Tibial artery (tissue), 4 donors: ENCODE measurements at regions of chr9 and their contacts with region 1.

Region 1: DNA sequence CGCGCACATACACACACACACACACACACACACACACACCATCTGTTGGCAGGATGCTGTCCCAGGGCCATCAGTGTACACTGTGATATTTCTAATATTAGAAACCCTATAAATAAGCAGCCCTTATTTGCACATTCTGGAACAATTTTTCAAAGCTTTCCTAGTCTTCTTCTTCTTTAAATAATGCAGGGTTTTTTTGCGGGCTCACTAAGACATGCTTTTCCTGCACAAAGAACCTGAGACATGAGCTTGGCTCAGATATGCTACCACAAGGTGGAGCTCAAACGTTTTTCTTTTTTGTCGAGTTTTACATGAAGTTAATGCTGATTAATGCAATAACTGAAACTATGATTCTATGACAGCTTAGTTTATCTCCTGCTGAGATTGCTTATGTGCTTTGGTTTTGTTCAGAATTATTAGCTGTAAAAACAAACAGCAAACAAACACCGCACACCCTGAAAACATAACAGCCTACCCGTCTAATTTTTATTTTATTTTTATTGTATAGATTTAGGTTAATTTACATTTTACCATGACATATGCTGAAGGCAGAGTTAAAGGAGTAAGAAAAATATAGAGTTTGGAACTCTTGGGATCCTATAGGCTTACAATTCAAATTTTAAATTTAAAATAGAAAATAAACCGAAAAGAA is 95.8 kb downstream of the ALDH1A1 start:
- DNase-seq: no peak
- H3K4me3 ChIP-seq: no peak overlapping the region
- H3K27ac ChIP-seq: peak overlapping the region; percentile 13 to 38
- H3K4me1 ChIP-seq: peaks cover 0 to 25% (median 10%) of the 10 kb centered on the region in 4 donors
- H3K27me3 ChIP-seq: no peaks in the 10 kb centered on the region
- CTCF ChIP-seq: peak; percentile 65 to 82

Region 2: DNA sequence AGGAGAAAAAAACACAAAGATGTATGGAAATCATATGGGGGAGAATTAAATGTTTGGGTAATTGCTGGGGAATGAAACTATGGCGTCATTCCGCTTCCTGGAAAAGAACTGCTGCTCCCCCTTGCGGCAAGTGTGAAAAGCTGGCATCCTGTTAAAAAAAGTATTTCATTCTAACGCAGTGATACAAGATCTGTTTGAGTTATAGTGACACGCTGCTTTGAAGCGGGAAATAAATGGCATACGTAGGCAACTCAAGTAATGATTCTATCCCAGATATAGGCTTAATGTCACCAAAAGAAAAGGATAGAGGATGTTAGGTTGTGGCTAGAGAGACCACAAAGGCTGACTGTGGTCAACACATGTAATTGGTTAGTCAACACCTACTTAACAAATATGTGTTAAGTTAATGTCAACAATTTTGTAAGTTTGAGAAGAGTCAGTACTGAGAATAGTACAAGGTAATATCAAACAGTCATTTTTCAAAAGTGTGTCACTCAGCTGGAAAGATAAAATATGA is 166.0 kb after region 1 on chr9:
- intact Hi-C with region 1: loop called (anchors 10 kb)
- DNase-seq: peak in 1 of 2 donors; percentile 71
- H3K4me3 ChIP-seq: no peak overlapping the region
- H3K27ac ChIP-seq: no peak overlapping the region
- H3K4me1 ChIP-seq: peaks cover 0 to 15% (median 0%) of the 10 kb centered on the region in 4 donors
- H3K27me3 ChIP-seq: no peaks in the 10 kb centered on the region
- CTCF ChIP-seq: peak; percentile 76 to 83

Region 3: GRCh38 chr9:73081979-73082657 is 225.0 kb after region 1 on chr9:
- intact Hi-C with region 1: loop called (anchors 2 kb)
- DNase-seq: no peak
- H3K4me3 ChIP-seq: no peak overlapping the region
- H3K27ac ChIP-seq: no peak overlapping the region
- H3K4me1 ChIP-seq: peaks cover 0 to 30% (median 13%) of the 10 kb centered on the region in 4 donors
- H3K27me3 ChIP-seq: no peaks in the 10 kb centered on the region
- CTCF ChIP-seq: peak; percentile 81 to 90

Region 4: GRCh38 chr9:73104342-73104741 is 247.2 kb after region 1 on chr9:
- intact Hi-C with region 1: no loop called
- DNase-seq: no peak
- H3K4me3 ChIP-seq: no peak overlapping the region
- H3K27ac ChIP-seq: no peak overlapping the region
- H3K4me1 ChIP-seq: peaks cover 0 to 12% (median 0%) of the 10 kb centered on the region in 4 donors
- H3K27me3 ChIP-seq: no peaks in the 10 kb centered on the region
- CTCF ChIP-seq: no peak

Region 5: GRCh38 chr9:73183917-73184861 is 327.1 kb after region 1 on chr9:
- intact Hi-C with region 1: loop called (anchors 5 kb)
- DNase-seq: no peak
- H3K4me3 ChIP-seq: no peak overlapping the region
- H3K27ac ChIP-seq: no peak overlapping the region
- H3K4me1 ChIP-seq: peaks cover 0 to 17% (median 3%) of the 10 kb centered on the region in 4 donors
- H3K27me3 ChIP-seq: no peaks in the 10 kb centered on the region
- CTCF ChIP-seq: peak; percentile 49 to 58

Region 6: GRCh38 chr9:73200694-73201452 is 343.8 kb after region 1 on chr9:
- intact Hi-C with region 1: no loop called
- DNase-seq: no peak
- H3K4me3 ChIP-seq: no peak overlapping the region
- H3K27ac ChIP-seq: no peak overlapping the region
- H3K4me1 ChIP-seq: no peaks in the 10 kb centered on the region
- H3K27me3 ChIP-seq: peaks cover 0 to 4% of the 10 kb centered on the region in 2 donors
- CTCF ChIP-seq: peak; percentile 27 to 47